AG04449 (cell line): ENCODE measurements at regions of chr14 and their contacts with region 1.

Region 1: GRCh38 chr14:49620182-49621113 is at the starts of genes MGAT2 and RPL36AL:
- DNase-seq: peak; percentile 93
- H3K4me3 ChIP-seq: peak within 1 kb of the TSS; percentile 93
- CTCF ChIP-seq: peak; percentile 42

Region 2: DNA sequence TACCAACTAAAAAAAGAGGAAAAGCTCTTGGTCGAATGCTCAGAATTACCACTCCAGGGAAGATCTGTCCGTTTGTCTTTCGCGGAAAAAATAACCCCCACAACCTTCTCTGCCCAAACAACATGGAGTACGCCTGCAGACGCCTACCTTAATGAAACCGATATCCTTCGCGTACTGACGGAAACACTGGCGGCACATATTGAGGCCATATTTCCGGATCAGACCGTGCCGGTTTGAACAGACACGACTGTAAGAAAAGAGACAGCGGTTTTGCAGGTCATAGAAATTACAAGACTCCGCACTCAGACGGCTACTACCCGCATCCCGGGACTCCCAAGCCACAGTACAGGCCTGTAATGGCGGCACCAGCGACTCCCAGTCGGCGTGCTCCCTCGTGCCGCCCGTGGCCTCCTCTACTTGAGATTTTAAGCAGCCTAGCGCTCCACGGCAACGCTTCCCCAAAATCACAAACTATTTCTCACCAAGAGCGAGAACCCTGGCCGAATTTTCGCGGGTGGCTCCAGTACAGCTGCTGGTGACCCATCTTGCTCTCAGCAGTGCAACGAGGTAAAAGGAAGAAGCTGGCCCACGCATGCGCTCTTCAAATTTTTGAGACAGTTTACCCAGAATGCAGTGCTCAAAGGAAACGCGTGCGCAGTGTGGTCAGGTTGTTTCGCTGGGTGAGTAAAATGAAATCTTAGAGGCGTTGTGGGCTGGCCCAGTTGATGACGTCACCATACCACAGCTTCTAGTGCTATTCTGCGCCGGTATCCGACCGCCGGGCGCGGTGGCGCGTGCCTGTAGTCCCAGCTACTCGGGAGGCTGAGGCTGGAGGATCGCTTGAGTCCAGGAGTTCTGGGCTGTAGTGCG is 34.4 kb before region 1 on chr14 and contains the start of gene RPS29:
- CTCF ChIA-PET with region 1: interaction called, 30 read pairs
- POLR2A ChIA-PET with region 1: interaction called, 11 read pairs
- DNase-seq: peak; percentile 94
- H3K4me3 ChIP-seq: peak within 1 kb of the TSS; percentile 84
- CTCF ChIP-seq: no peak

Region 3: GRCh38 chr14:49598485-49599300 is 21.8 kb before region 1 on chr14 and contains the start of gene LRR1:
- CTCF ChIA-PET with region 1: interaction called, 3 read pairs
- POLR2A ChIA-PET with region 1: interaction called, 19 read pairs
- DNase-seq: no peak
- H3K4me3 ChIP-seq: peak within 1 kb of the TSS; percentile 96
- CTCF ChIP-seq: no peak

Region 4: DNA sequence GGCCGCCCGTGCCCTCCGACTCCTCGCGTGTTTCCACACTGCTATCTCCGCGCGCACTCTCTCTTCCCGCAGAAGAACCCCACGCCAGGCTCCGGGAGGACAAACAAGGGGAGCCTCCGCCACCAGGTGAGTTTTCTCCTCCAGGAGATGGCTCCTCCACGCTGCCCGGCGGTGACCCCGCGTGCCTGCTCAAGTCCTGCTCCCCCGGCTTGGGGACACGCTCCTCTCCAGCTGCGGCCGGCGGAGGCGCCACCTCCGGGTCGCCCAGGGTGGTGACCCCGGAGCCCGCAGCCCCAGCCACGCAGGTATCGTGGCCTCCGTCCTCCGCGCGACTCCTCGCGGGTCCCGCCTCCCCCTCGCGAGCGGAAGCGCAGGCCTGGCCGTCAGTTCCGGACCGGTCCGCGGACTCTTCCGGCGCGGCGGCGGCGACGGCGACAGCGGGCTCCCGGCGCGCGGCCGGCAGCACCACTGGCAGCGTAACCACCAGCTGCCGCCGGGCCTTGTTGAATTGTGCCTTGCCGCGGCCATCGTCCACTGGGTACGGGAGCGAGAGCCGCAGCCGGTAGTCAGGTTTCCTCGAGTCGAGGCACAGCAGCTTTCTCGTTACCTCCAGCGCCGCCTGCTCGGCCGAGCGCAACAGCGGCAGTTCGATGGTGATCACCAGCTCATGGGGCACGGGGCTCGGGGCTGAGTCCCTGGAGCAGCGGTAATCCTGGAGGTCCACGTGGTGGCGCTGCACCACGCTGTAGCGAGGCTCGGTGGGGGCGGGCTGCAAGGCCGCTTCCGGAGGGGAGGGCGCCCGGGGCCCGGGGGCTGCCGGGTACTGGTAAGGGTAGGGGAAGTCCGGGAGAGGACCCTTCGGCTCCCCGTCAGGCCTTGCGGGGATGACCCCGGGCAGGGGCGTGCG is 13.4 kb after region 1 on chr14:
- CTCF ChIA-PET with region 1: interaction called, 44 read pairs
- POLR2A ChIA-PET with region 1: interaction called, 23 read pairs
- DNase-seq: peak; percentile 56
- H3K4me3 ChIP-seq: peak overlapping the region; percentile 81
- CTCF ChIP-seq: peak; percentile 93

Region 5: DNA sequence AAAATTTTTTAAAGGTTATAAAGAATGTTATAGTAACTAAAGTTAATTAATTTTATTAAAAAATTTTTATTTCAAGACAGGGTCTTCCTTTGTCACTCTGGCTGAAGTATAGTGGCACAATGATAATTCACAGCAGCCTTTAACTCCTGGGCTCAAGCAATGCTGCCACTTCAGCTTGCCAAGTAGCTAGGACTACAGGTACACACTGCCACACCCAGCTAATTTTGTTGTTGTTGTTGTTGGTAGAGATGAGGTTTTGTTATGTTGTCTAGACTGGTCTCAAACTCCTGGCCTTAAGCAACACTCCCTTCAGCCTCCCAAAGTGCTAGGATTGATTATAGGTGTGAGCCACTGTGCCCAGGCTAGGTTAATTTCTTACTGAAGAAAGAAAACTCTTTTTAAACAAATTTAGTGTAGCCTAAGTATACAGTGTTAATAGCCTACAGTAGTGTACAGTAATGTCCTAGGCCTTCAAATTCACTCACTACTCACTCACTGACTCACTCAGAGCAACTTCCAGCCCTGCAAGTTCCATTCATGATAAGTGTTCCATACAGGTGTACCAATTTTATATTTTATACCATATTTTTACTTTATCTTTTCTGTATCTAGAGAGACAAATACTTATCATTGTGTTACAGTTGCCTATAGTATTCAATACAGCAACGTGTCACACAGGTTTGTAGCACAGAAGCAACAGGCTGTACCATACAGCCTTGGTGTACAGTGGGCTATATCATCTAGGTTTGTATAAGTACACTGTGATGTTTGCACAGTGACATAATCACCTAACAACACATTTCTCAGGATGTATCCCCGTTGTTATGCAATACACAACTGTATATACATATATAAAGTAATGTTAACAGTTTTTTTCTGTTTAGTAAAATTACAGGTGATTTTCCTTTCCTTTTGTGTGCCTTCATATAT is 39.3 kb after region 1 on chr14:
- CTCF ChIA-PET with region 1: no interaction called
- POLR2A ChIA-PET with region 1: no interaction called
- DNase-seq: no peak
- H3K4me3 ChIP-seq: no peak overlapping the region
- CTCF ChIP-seq: no peak

Region 6: DNA sequence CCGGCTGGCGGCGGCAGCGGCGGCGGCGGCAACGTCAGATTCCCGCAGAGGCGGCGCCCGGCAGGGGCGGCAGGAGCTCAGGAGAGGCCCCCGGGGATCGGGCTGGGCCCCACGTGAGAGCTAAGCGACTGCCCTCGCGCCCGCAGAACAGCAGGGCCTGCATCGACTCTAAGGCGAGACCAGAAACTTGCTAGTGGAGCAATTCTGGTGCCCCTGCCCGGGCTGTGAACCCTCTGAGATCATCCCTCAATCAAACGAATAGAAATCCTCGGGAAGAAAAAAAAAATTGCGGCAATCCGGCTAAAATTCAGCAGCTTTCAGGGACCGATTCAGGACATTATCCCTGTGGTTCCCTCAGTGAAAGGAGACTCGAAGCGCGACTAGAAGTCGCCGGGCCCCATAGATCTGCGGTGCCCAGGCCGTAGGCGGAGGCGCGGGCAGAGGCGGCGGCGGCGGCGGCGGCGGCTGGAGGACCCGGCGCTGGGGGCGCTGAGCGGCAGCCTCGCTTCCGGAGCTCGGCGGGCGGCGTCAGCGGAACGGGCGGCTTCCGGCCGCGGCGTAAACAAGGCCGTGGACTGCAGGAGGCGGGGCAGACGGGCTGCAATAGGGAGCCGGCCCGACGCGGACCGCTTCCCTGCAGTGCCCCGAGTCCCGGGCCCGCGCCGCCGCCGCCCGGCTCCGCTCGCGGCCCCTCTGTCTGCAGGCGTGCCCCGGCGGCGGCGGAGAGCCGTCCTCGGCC is 147.3 kb after region 1 on chr14 and contains the start of gene KLHDC2:
- CTCF ChIA-PET with region 1: no interaction called
- POLR2A ChIA-PET with region 1: interaction called, 16 read pairs
- DNase-seq: no peak
- H3K4me3 ChIP-seq: peak within 1 kb of the TSS; percentile 96
- CTCF ChIP-seq: peak; percentile 36